ENCODE measurements at regions of chr19 and their contacts with region 1.

Region 1: GRCh38 chr19:47243776-47244547 is 12.4 kb upstream of the CCDC9 start:
- DNase-seq: peak; percentile 94 to 97
- ATAC-seq: peak; percentile 86 to 94
- H3K4me3 ChIP-seq: peak overlapping the region; percentile 49
- H3K27ac ChIP-seq: peak overlapping the region; percentile 82 to 98
- H3K4me1 ChIP-seq: peaks cover 33% of the 10 kb centered on the region
- CTCF ChIP-seq: peak; percentile 99
- EP300 ChIP-seq: peak; percentile 22 to 84; a peak in 3 of 5 replicates
- POLR2A ChIP-seq: no peak; the same call in 1 of the 2 replicates
- RAD21 ChIP-seq: peak; percentile 96 to 99

Region 2: DNA sequence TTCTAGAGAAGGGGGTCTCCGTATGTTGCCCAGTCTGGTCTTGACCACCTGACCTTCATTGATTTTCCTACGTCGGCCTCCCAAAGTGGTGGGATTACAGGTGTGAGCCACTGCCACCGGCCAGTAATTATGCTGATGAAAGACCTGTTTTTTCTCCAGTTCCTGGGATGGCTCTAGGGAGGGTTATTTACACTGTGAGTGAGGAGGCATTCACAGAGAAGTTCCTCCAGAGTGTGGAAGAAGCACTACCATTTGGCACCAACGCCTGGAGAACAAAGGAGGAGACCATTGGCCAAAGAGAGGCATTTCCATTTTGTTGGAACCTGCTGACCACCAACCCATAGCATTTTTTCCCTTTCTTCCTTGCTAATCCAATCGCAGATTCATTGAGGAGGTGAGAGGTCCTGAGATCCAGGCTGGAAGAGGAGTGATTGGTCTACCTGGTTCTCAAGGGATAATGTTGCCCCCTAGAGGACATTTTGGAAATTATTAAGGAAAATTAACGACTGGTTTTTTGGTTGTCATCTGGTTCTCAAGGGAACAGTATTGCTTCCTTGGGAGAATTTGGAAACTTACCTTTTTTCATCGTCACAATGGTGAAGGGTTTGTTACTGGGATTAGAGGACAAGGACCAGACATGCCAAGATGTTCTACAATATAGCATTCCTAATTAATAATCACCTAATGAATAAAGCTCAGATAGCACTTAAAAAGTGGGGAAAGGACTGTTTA is 118.9 kb before region 1 on chr19:
- CTCF ChIA-PET with region 1: interaction called, 12 read pairs
- POLR2A ChIA-PET with region 1: interaction called, 3 read pairs
- DNase-seq: peak; percentile 86 to 90
- ATAC-seq: peak; percentile 84 to 85
- H3K4me3 ChIP-seq: no peak overlapping the region
- H3K27ac ChIP-seq: peak overlapping the region in 1 of 2 experiments; percentile 51; a peak in 3 of 6 replicates
- H3K4me1 ChIP-seq: peaks cover 33% of the 10 kb centered on the region
- CTCF ChIP-seq: peak; percentile 95
- EP300 ChIP-seq: no peak
- POLR2A ChIP-seq: no peak
- RAD21 ChIP-seq: peak; percentile 91 to 95

Region 3: DNA sequence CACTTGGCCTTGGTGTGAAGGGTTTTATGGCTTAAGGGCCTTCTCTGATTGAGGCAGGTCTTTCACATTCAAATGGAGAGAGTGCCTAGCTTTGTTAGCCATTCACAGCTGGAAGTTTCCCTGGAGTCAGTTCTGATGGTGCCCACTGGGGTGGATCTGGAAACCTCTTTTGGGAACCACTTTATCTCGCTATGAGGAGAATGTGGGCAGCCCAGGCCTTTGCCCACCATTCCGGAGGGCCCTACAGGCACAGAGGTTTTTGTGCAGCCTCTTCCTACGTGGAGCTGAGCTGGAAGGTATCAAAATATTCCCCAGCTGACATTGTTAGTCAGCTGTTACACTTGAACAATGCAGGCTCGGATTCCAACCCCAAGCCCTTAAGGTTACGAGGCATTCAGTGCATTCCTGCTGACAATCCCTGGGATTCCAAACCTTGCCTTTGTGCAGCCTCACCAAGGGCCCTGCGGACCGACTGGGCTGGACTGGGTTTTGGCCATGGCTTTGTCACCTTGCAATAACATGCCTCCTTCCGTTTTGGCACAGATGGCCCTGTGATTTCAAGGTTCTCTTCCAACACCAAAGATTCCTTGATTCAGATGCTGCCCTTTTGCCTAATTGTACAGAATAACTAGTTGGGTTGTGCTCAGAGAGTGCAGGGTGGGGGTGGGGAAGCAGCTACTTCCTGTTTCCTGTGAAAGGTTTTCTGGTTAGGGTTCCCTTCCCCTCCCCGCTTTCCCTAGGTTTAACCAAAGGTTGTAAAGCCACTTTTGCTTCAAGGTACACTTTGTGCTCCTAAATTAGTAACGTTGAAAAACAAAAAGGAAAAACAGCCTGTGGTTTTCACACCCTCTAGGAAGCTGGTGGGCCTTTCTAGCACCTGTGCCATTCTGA is 86.3 kb before region 1 on chr19:
- CTCF ChIA-PET with region 1: interaction called, 364 read pairs
- POLR2A ChIA-PET with region 1: interaction called, 10 read pairs
- DNase-seq: no peak
- ATAC-seq: peak; percentile 42 to 54; a peak in 4 of 6 replicates
- H3K4me3 ChIP-seq: no peak overlapping the region
- H3K27ac ChIP-seq: peak overlapping the region in 1 of 2 experiments; percentile 63; a peak in 3 of 6 replicates
- H3K4me1 ChIP-seq: peaks cover 29% of the 10 kb centered on the region
- CTCF ChIP-seq: no peak
- EP300 ChIP-seq: no peak
- POLR2A ChIP-seq: no peak
- RAD21 ChIP-seq: no peak

Region 4: DNA sequence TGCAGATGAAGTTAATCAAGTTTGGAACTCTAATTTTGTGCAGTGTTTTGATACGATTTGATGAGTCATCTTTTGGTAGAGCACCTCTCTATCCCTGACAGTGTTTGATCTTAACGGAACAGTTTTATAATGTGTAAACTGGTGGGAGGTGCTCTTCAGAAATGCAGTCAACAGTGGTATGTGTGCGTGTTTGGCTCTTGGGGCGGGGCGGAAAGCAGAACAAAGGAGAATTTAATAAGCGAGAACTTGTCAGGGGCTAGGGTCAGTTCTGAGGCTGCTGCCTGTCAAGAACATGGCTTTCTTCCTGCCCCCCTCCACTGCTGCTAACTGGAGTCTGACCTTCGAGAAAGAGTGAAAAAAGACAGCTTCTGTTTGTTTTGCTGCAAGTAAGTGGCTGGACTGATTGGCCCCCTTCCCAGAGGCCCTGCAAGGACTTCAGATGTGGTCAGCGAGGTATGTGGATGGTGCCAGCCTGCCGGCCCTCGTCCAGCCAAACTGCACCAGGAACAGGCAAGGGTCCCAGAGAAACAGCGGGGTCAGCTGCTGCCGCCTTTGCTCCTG is 53.7 kb before region 1 on chr19:
- CTCF ChIA-PET with region 1: interaction called, 15 read pairs
- POLR2A ChIA-PET with region 1: no interaction called
- DNase-seq: peak; percentile 65 to 92
- ATAC-seq: peak; percentile 78 to 88
- H3K4me3 ChIP-seq: 0 out of 3 replicates have a peak overlapping the region, but pooled peaks have one; percentile 8
- H3K27ac ChIP-seq: peak overlapping the region; percentile 67 to 79
- H3K4me1 ChIP-seq: peaks cover 38% of the 10 kb centered on the region
- CTCF ChIP-seq: no peak
- EP300 ChIP-seq: peak in 1 of 2 experiments; percentile 68; a peak in 1 of 5 replicates
- POLR2A ChIP-seq: no peak
- RAD21 ChIP-seq: no peak; a peak in 1 of 5 replicates

Region 5: GRCh38 chr19:47210689-47211316 is 33.2 kb before region 1 on chr19:
- CTCF ChIA-PET with region 1: interaction called, 893 read pairs
- POLR2A ChIA-PET with region 1: interaction called, 40 read pairs
- DNase-seq: peak; percentile 77 to 85
- ATAC-seq: peak; percentile 61 to 63
- H3K4me3 ChIP-seq: no peak overlapping the region
- H3K27ac ChIP-seq: peak overlapping the region; percentile 76 to 82
- H3K4me1 ChIP-seq: peaks cover 16% of the 10 kb centered on the region
- CTCF ChIP-seq: peak; percentile 92
- EP300 ChIP-seq: no peak
- POLR2A ChIP-seq: no peak
- RAD21 ChIP-seq: peak; percentile 85 to 88

Region 6: GRCh38 chr19:47256688-47257443 is 12.9 kb after region 1 on chr19:
- CTCF ChIA-PET with region 1: interaction called, 107 read pairs
- POLR2A ChIA-PET with region 1: interaction called, 57 read pairs
- DNase-seq: peak; percentile 99 to 100
- ATAC-seq: peak; percentile 71 to 85
- H3K4me3 ChIP-seq: peak overlapping the region; percentile 61
- H3K27ac ChIP-seq: peak overlapping the region; percentile 91 to 92
- H3K4me1 ChIP-seq: peaks cover 30% of the 10 kb centered on the region
- CTCF ChIP-seq: no peak
- EP300 ChIP-seq: no peak
- POLR2A ChIP-seq: no peak
- RAD21 ChIP-seq: no peak

Measured in A549 (cell line).